Esophagus muscularis mucosa (tissue), 4 donors: ENCODE measurements at regions of chr5 and their contacts with region 1.

Region 1: GRCh38 chr5:122845229-122846050 is at the start of gene SNX24:
- DNase-seq: peak; percentile 93
- H3K4me3 ChIP-seq: peak within 1 kb of the TSS; percentile 86 to 97 (median 96)
- H3K27ac ChIP-seq: peak within 1 kb of the TSS; percentile 87 to 96 (median 92)
- H3K4me1 ChIP-seq: peaks cover 10 to 28% (median 23%) of the 10 kb centered on the region in 4 donors
- H3K27me3 ChIP-seq: no peaks in the 10 kb centered on the region
- CTCF ChIP-seq: peak in 1 of 3 experiments; percentile 9
- EP300 ChIP-seq: no peak
- POLR2A ChIP-seq: no peak
- total RNA-seq, gene SNX24: 12.5 to 16.4 (median 13.9) TPM

Region 2: DNA sequence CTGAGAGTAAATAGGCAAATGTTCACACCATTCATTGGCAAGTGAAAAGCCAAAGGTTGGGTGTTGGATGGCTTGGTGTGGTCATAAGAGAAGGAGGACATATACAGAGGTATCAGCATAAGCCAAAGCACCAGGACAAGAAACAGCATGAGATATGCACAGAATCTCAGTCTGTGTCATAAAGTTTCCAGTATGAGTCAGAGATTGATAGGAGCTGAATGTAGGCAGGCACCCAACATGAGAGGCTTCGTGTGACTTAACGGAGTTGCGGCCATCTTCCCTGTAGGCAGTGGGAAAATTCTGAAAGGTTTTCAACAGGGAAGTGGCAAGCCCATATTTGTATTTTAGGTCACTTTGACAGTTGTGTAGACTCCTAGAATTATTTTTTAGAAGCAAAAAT is 478.9 kb before region 1 on chr5:
- intact Hi-C with region 1: no loop called
- DNase-seq: no peak
- H3K4me3 ChIP-seq: no peak overlapping the region
- H3K27ac ChIP-seq: no peak overlapping the region
- H3K4me1 ChIP-seq: peaks cover 0 to 19% (median 6%) of the 10 kb centered on the region in 4 donors
- H3K27me3 ChIP-seq: no peaks in the 10 kb centered on the region
- CTCF ChIP-seq: no peak
- EP300 ChIP-seq: no peak
- POLR2A ChIP-seq: no peak

Region 3: GRCh38 chr5:122774861-122775549 is 70.4 kb before region 1 on chr5 and contains the start of gene SNX2:
- intact Hi-C with region 1: loop called (anchors 2 kb)
- DNase-seq: peak; percentile 97
- H3K4me3 ChIP-seq: peak within 1 kb of the TSS; percentile 88 to 98 (median 92)
- H3K27ac ChIP-seq: peak within 1 kb of the TSS; percentile 86 to 94 (median 92)
- H3K4me1 ChIP-seq: peaks cover 18 to 34% (median 28%) of the 10 kb centered on the region in 4 donors
- H3K27me3 ChIP-seq: no peaks in the 10 kb centered on the region
- CTCF ChIP-seq: peak in 1 of 3 experiments; percentile 25
- EP300 ChIP-seq: no peak
- POLR2A ChIP-seq: peak; percentile 25
- total RNA-seq, gene SNX2: 62.1 to 86.0 (median 75.4) TPM

Region 4: DNA sequence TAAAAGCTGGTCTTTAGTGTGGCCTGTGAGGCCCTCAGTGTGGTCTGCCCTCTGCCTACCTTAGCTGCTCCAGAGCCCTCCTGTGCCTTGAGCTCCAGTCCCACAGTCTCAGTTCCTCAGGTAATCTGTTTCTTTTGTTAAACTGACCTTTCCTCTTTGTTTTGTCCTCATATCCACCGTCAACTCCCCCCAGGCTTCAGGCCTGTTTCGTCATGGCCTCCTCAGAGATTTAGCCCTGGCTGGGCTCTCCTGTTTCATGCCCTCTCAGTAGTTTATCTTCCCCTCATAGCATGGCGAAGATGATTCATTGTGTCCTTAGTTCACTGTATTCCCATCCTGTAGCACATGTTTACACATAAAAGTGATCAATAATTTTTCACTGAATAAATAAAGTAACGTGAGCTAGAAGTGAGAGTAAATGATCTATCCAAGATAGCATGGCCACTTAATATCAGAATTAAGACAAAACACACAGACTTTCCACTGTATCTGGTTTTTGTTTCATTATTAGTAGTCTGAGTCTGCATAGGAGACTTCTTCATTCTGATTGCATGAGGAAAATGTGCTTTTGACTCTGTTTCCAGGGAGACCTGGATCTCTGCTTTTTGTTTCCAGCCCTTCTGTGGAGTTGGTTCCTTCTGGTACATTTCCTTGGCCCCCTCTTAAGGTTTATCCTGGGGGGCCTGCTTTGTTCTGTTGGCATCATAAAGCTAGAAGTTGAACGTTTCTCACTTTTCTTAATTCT is 70.4 kb after region 1 on chr5:
- intact Hi-C with region 1: no loop called
- DNase-seq: no peak
- H3K4me3 ChIP-seq: no peak overlapping the region
- H3K27ac ChIP-seq: no peak overlapping the region
- H3K4me1 ChIP-seq: peaks cover 0 to 14% (median 10%) of the 10 kb centered on the region in 4 donors
- H3K27me3 ChIP-seq: no peaks in the 10 kb centered on the region
- CTCF ChIP-seq: no peak
- EP300 ChIP-seq: no peak
- POLR2A ChIP-seq: no peak

Region 5: GRCh38 chr5:123036391-123037103 is 191.1 kb after region 1 on chr5 and contains the start of gene PPIC:
- intact Hi-C with region 1: loop called (anchors 5 kb)
- DNase-seq: peak; percentile 95
- H3K4me3 ChIP-seq: peak within 1 kb of the TSS; percentile 78 to 93 (median 86)
- H3K27ac ChIP-seq: peak within 1 kb of the TSS; percentile 87 to 95 (median 93)
- H3K4me1 ChIP-seq: peaks cover 20 to 31% (median 24%) of the 10 kb centered on the region in 4 donors
- H3K27me3 ChIP-seq: no peaks in the 10 kb centered on the region
- CTCF ChIP-seq: no peak
- EP300 ChIP-seq: no peak
- POLR2A ChIP-seq: peak; percentile 2
- total RNA-seq, gene PPIC: 14.2 to 47.4 (median 44.3) TPM

Region 6: GRCh38 chr5:123157791-123158581 is 312.5 kb after region 1 on chr5:
- intact Hi-C with region 1: no loop called
- DNase-seq: no peak
- H3K4me3 ChIP-seq: peak overlapping the region in 3 of 4 donors; percentile 10 to 26 (median 21)
- H3K27ac ChIP-seq: peak overlapping the region; percentile 21 to 51 (median 40)
- H3K4me1 ChIP-seq: peaks cover 0 to 28% (median 26%) of the 10 kb centered on the region in 4 donors
- H3K27me3 ChIP-seq: no peaks in the 10 kb centered on the region
- CTCF ChIP-seq: peak in 1 of 3 experiments; percentile 7
- EP300 ChIP-seq: no peak
- POLR2A ChIP-seq: no peak